ENCODE measurements at regions of chr19 and their contacts with region 1.

Region 1: GRCh38 chr19:43446746-43447489 is 18.5 kb downstream of the LYPD3 start:
- DNase-seq: peak; percentile 82
- ATAC-seq: peak; percentile 76
- H3K4me3 Mint-ChIP-seq: no peak overlapping the region
- H3K27ac Mint-ChIP-seq: no peak overlapping the region
- H3K4me1 Mint-ChIP-seq: peaks cover 16% of the 10 kb centered on the region
- H3K27me3 Mint-ChIP-seq: no peaks in the 10 kb centered on the region

Region 2: DNA sequence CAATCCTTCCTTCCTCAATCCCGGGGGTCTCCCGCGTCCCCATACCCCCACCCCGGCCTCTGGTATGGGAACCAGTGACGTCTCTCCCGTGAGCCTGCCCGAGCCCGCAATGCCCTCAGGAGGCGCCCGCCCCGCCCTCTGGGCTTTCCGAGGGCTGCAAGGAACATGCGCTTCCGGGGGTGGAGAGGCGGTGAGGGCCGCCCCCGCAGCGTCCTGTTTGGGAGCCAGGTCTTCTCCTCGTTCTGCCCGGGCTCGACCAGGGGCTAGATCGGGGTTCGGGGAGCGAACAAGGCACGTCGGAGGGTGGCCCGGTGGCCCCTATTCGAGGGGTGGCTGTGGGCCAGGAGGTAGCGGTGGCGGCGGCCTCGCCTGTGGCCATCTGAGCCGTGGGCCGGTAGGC is 38.9 kb before region 1 on chr19:
- CTCF ChIA-PET with region 1: no interaction called
- DNase-seq: no peak
- ATAC-seq: no peak
- H3K4me3 Mint-ChIP-seq: no peak overlapping the region
- H3K27ac Mint-ChIP-seq: no peak overlapping the region
- H3K4me1 Mint-ChIP-seq: no peaks in the 10 kb centered on the region
- H3K27me3 Mint-ChIP-seq: no peaks in the 10 kb centered on the region

Region 3: DNA sequence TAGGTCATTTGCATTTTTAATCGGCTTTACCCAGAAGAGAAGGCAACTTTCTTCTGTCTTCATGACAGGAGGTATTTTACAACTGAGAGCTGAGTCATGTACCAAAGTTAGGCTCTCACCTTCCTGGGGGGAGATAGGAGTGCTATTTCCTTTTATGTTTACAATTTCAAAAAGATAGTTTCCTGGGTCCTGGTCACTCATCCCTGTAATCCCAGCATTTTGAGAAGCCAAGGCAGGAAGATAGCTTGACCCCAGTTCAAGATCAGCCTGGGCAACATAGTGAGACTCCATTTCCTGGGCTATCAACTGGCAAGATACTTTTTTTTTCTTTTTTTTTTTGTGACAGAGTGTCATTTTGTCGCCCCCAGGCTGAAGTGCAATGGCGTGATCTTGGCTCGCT is 10.9 kb after region 1 on chr19:
- CTCF ChIA-PET with region 1: interaction called, 54 read pairs
- DNase-seq: no peak
- ATAC-seq: no peak
- H3K4me3 Mint-ChIP-seq: no peak overlapping the region
- H3K27ac Mint-ChIP-seq: no peak overlapping the region
- H3K4me1 Mint-ChIP-seq: peaks cover 4% of the 10 kb centered on the region
- H3K27me3 Mint-ChIP-seq: peaks cover 8% of the 10 kb centered on the region

Region 4: DNA sequence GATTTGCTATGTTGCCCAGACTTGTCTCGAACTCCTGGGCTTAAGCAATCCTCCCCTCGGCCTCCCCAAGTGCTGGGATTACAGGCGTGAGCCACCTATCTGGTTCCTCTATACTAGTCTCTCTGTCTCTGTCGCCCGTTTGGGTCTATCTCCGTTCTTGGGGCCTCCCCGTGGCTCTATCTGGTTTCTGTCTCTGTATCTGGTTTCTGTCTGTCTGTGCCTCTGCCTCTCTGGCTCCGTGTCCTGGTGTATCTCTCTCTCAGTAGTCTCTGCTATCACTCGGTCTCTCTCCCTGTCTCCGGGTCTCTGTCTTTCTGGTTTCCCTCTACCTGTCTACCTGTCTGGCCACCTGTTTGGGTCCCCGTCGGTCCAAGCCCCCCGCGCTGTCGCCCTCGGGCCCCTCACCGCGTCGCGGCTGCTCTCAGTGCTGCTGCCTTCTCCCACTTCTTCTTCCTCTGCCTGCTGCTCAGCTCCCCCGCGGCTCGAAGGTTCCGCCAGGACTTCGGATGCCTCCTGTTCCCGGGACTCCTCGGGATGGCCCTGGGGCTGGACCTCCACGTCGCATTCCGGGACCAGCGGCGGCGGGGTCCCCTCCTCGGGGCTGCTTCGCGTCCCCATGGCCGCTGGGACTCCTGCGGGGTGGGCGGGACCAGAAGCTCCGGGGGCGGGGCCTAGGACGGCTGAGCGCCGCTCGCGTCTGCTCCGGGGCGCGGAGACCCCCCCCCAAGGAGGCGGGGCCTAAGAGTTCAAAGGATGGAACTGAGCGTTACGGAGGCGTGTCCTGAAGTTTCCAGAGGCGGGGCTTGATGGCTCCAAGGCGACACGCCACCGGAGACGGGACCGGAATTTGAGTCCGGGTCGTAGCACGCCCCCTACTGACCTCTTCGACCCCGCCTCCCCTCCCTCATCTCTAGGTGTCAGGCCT is 56.8 kb after region 1 on chr19:
- CTCF ChIA-PET with region 1: interaction called, 31 read pairs
- DNase-seq: peak; percentile 99
- ATAC-seq: peak; percentile 95
- H3K4me3 Mint-ChIP-seq: peak overlapping the region; percentile 97
- H3K27ac Mint-ChIP-seq: peak overlapping the region; percentile 91
- H3K4me1 Mint-ChIP-seq: peaks cover 21% of the 10 kb centered on the region
- H3K27me3 Mint-ChIP-seq: no peaks in the 10 kb centered on the region

Region 5: GRCh38 chr19:43532962-43533545 is 86.1 kb after region 1 on chr19 and contains the start of gene ZNF575:
- CTCF ChIA-PET with region 1: interaction called, 14 read pairs
- DNase-seq: peak; percentile 93
- ATAC-seq: peak; percentile 67
- H3K4me3 Mint-ChIP-seq: peak within 1 kb of the TSS; percentile 94
- H3K27ac Mint-ChIP-seq: peak within 1 kb of the TSS; percentile 98
- H3K4me1 Mint-ChIP-seq: peaks cover 19% of the 10 kb centered on the region
- H3K27me3 Mint-ChIP-seq: no peaks in the 10 kb centered on the region
- total RNA-seq, gene ZNF575: 2.9 to 3.7 TPM

Region 6: DNA sequence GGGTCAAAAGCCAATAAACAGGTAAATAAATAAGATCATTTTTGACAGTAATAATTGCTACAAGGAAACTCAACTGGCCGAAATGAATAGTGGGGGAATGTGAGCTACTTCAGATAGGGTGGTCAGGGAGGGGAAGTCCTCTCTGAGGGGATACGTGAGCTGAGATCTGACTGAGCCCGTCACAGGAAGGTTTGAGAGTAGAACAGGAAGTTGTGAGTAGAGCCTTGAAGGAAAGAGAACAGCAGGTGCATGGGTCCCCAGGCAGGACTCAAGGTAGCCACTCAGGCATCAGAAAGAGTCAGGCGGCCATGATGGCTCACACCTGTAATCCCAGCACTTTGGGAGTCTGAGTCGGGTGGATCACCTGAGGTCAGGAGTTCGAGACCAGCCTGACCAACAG is 142.8 kb after region 1 on chr19:
- CTCF ChIA-PET with region 1: interaction called, 31 read pairs
- DNase-seq: no peak
- ATAC-seq: no peak
- H3K4me3 Mint-ChIP-seq: no peak overlapping the region
- H3K27ac Mint-ChIP-seq: peak overlapping the region; percentile 72
- H3K4me1 Mint-ChIP-seq: peaks cover 26% of the 10 kb centered on the region
- H3K27me3 Mint-ChIP-seq: no peaks in the 10 kb centered on the region

Measured in activated CD8-positive, alpha-beta memory T cell treated with anti-CD3 and anti-CD28 coated beads, Interleukin-2, amount 10 ng/mL, durations not matched to agents 7 days and 5 days (primary cell).